ENCODE measurements at regions of chr12 and their contacts with region 1.

Region 1: DNA sequence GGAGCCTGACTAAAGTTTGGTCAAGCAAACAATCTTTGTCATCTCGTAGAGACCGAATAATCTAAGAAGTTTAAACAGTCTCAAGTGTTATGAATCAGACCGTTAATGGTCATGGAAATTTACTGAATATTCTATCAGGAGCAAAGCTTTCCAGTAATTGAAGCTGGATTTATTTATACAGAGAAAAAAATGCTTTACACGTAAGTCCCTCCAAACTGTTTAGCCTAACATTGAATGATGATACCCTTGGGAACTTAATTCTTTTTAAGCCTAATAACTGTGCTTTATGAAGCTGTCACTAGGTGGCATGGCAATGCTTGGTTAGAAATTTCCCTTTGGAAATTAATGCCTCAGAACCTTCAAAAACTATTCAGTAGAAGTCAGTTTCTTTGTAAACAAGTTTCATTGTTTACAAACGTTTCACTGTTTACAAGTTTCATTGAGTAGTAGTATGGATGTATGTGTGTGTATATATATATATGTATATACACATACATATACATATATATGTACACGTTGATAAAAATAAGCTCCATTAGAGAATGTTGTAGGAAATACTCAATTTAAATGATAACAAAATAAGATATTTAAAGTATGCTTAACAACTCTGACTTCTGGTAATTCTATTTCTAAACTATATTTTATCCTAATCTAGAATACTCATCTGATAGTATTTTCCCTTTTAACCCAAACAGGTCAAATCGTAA is 32.1 kb downstream of the DEPDC4 start:
- DNase-seq: no peak
- ATAC-seq: peak; percentile 55

Region 2: GRCh38 chr12:100058482-100059029 is 176.2 kb before region 1 on chr12:
- intact Hi-C with region 1: no loop called
- DNase-seq: no peak
- ATAC-seq: no peak

Region 3: GRCh38 chr12:100324498-100324897 is 89.7 kb after region 1 on chr12:
- intact Hi-C with region 1: no loop called
- DNase-seq: no peak
- ATAC-seq: no peak

Region 4: DNA sequence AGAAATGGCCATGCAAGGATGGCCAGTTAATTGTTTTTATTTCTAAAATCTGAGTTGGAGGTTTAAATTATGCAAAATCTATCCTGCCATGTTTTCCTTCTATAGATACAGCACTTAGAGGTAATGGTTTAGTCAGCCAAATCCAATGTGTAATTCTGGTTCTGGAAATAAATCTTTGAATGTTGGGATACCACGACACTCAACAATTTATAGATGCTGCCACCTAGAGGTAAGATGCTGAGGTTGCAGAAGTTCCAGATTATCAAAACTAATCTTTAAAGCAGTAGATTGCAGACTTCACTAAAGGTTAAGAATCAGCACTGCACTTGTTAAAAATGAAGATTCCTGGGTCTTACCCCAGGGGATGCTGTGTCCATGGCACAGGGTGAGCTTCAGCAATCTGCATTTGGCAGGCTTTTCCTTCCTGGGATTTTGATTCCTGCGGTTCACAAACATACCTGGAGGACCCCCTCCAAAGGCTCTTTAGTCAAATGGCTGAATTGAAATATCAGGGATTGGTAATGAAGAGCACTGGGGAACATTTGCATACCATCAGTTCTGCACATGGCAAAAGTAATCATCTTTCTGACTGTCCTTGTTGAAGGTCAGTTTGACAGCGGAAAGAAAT is 506.4 kb after region 1 on chr12:
- intact Hi-C with region 1: loop called (anchors 10 kb)
- DNase-seq: no peak
- ATAC-seq: no peak

Measured in left ventricle myocardium superior (tissue), 1 donor.